ENCODE measurements at regions of chr15 and their contacts with region 1.

Region 1: DNA sequence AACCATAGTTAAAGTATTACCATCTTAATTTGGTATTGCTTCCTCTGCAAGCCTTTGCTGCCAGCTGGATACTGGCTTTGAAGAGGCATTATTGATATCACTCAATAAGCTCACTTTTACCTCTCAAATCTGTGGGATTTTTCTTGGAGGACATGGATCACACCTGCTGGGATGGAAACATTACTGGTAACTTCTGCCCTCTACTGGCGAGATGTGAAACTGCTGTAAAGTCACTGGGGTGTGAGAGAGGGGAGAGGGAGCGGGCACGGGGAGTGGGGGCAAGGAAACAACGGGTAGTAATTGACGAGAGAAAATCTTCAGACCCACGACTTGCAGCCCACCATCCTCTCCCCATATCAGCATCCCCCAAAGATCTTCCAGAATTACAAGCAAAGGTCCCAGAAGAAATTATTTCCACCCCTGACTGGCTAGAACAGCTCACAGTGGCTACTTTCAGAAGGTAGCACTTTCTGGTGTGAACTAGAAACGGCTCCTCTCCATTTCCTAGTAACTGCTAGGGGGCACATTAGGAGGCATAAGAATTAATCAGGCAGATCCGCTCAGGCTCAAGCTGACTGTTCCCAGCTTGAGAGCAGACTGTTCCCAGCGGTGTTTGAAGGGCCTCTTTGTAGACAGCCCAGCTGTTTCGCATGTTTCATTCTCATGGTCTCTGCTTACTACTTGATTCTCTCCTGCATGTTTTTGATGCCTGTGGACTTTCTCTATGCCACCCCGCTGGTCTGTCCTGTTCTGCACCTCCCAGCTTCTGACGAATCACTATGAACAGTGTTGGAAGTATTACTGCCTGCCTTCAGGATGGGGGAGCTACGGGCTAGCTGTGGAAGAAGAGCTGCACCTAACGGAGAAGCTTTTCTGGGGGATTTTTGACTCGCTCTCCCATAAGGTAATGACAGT is 230.4 kb upstream of the CHRM5 start:
- DNase-seq: peak; percentile 44
- CTCF ChIP-seq: peak; percentile 85

Region 2: GRCh38 chr15:33722005-33722672 is 15.8 kb before region 1 on chr15:
- CTCF ChIA-PET with region 1: interaction called, 66 read pairs
- POLR2A ChIA-PET with region 1: no interaction called
- DNase-seq: no peak
- CTCF ChIP-seq: no peak

Region 3: DNA sequence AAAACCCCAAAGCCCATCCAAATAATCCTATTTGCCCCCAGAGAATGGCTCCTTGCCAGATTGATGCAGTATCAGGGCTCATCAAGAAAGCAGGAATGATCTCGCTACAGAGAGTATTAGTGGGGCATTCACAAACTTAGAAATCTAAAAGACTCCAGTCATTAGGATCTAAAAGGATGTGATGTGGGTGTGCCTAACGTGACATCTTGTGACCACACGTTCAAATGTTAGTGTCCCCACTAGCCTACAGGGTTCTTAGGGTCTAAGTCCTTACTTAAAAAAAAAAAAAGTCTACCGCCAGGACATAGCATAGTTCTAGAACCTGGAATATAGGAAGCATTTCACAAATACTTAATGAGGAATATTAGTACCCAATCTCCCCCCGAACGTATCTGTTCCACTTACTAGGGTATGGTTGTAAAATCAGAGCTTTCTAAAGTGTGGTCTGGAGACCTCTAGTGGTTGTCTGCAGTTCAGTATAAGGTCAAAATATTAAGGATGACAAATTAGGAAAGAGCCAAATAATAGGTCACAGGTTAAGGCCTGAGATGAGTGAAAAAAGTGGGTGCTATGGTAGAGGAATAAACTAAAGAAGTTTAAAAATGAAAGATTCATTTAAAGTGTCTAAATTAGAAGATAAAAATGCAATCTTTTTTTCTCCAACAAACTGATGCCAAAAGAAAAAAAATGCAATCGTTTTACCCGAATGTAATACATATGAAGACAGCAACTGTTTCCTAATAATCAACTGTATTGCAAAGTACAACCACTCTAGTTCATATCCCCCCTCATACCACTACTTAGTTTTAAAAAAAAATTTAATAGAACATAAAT is 226.1 kb after region 1 on chr15:
- CTCF ChIA-PET with region 1: interaction called, 14 read pairs
- POLR2A ChIA-PET with region 1: no interaction called
- DNase-seq: peak; percentile 48
- CTCF ChIP-seq: peak; percentile 64

Region 4: DNA sequence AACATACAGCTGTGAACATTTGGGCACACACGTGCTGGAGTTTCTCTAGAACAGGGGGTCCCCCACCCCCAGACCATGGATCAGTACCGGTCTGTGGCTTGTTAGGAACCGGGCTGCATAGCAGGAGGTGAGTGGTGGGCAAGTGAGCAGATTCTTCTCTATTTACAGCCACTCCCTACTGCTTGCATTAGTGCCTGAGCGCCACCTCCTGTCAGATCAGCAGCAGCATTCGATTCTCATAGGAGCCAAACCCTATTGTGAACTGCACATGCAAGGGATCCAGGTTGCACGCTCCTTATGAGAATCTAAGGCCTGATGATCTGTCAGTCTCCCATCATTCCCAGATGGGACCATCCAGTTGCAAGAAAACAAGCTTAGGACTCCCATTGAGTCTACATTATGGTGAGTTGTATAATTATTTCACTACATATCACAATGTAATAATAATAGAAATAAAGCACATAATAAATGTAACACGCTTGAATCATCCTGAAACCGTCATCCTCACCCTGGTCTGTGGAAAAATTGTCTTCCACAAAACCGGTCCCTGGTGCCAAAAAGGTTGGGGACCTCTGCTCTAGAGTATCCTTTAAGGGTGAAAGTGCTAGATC is 256.2 kb after region 1 on chr15:
- CTCF ChIA-PET with region 1: interaction called, 13 read pairs
- POLR2A ChIA-PET with region 1: no interaction called
- DNase-seq: no peak
- CTCF ChIP-seq: peak; percentile 58